Ovary (tissue), 10 donors: ENCODE measurements at regions of chr7 and their contacts with region 1.

Region 1: GRCh38 chr7:34772296-34772938 is 114.4 kb downstream of the NPSR1 start:
- DNase-seq: no peak
- H3K4me3 ChIP-seq: no peak overlapping the region
- H3K27ac ChIP-seq: no peak overlapping the region
- H3K4me1 ChIP-seq: no peaks in the 10 kb centered on the region
- H3K27me3 ChIP-seq: no peaks in the 10 kb centered on the region
- CTCF ChIP-seq: no peak
- EP300 ChIP-seq: no peak
- POLR2A ChIP-seq: no peak

Region 2: DNA sequence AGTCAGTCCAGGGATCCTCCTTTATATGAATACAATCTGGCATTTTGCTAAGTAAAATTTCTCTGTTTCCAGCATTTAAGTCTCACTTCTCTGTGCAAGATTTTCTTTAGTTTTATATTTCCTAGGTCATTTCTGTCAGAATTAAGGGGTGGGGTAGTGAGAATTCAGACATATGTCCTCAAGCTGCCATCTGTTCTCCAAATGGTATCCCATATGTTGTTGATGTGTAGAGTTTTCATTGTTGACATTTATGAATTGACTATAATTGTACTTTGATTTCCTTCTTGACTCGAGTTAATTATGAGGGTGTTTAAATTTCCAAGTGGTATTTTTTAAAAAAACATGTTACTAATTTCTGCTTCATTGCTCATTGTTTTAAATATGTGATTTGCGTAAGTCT is 34.4 kb after region 1 on chr7:
- intact Hi-C with region 1: no loop called
- DNase-seq: no peak
- H3K4me3 ChIP-seq: no peak overlapping the region
- H3K27ac ChIP-seq: no peak overlapping the region
- H3K4me1 ChIP-seq: no peaks in the 10 kb centered on the region
- H3K27me3 ChIP-seq: no peaks in the 10 kb centered on the region
- CTCF ChIP-seq: no peak
- EP300 ChIP-seq: no peak
- POLR2A ChIP-seq: no peak

Region 3: GRCh38 chr7:34823640-34824258 is 51.3 kb after region 1 on chr7:
- intact Hi-C with region 1: loop called in 1 of 4 experiments (anchors 5 kb)
- DNase-seq: peak in 1 of 5 donors; percentile 23
- H3K4me3 ChIP-seq: no peak overlapping the region
- H3K27ac ChIP-seq: no peak overlapping the region
- H3K4me1 ChIP-seq: no peaks in the 10 kb centered on the region
- H3K27me3 ChIP-seq: no peaks in the 10 kb centered on the region
- CTCF ChIP-seq: peak in 1 of 3 donors; percentile 22
- EP300 ChIP-seq: no peak
- POLR2A ChIP-seq: no peak

Region 4: GRCh38 chr7:34949361-34949760 is 176.9 kb after region 1 on chr7:
- intact Hi-C with region 1: no loop called
- DNase-seq: no peak
- H3K4me3 ChIP-seq: no peak overlapping the region
- H3K27ac ChIP-seq: no peak overlapping the region
- H3K4me1 ChIP-seq: no peaks in the 10 kb centered on the region
- H3K27me3 ChIP-seq: no peaks in the 10 kb centered on the region
- CTCF ChIP-seq: no peak
- EP300 ChIP-seq: no peak
- POLR2A ChIP-seq: no peak